Mammary epithelial cell (primary cell): ENCODE measurements at regions of chr10 and their contacts with region 1.

Region 1: GRCh38 chr10:72273410-72274212 is at the start of gene DDIT4:
- DNase-seq: peak; percentile 99
- H3K4me3 ChIP-seq: peak within 1 kb of the TSS; percentile 59 to 78 (median 66)
- H3K27ac ChIP-seq: peak within 1 kb of the TSS; percentile 93
- H3K4me1 ChIP-seq: peaks cover 27% of the 10 kb centered on the region
- H3K27me3 ChIP-seq: no peaks in the 10 kb centered on the region
- CTCF ChIP-seq: no peak
- total RNA-seq, gene DDIT4: 772 to 1,235 TPM

Region 2: GRCh38 chr10:72126184-72126871 is 147.3 kb before region 1 on chr10:
- CTCF ChIA-PET with region 1: no interaction called
- dilution Hi-C with region 1: no loop called
- in situ Hi-C with region 1: no loop called
- intact Hi-C with region 1: loop called (anchors 2 kb)
- DNase-seq: peak; percentile 25
- H3K4me3 ChIP-seq: no peak overlapping the region
- H3K27ac ChIP-seq: no peak overlapping the region
- H3K4me1 ChIP-seq: no peaks in the 10 kb centered on the region
- H3K27me3 ChIP-seq: no peaks in the 10 kb centered on the region
- CTCF ChIP-seq: peak; percentile 36 to 51

Region 3: GRCh38 chr10:72248468-72249151 is 25.0 kb before region 1 on chr10:
- CTCF ChIA-PET with region 1: no interaction called
- dilution Hi-C with region 1: no loop called
- in situ Hi-C with region 1: no loop called
- intact Hi-C with region 1: loop called (anchors 2 kb)
- DNase-seq: peak; percentile 92
- H3K4me3 ChIP-seq: no peak overlapping the region
- H3K27ac ChIP-seq: peak overlapping the region; percentile 93
- H3K4me1 ChIP-seq: peaks cover 62% of the 10 kb centered on the region
- H3K27me3 ChIP-seq: no peaks in the 10 kb centered on the region
- CTCF ChIP-seq: no peak

Region 4: DNA sequence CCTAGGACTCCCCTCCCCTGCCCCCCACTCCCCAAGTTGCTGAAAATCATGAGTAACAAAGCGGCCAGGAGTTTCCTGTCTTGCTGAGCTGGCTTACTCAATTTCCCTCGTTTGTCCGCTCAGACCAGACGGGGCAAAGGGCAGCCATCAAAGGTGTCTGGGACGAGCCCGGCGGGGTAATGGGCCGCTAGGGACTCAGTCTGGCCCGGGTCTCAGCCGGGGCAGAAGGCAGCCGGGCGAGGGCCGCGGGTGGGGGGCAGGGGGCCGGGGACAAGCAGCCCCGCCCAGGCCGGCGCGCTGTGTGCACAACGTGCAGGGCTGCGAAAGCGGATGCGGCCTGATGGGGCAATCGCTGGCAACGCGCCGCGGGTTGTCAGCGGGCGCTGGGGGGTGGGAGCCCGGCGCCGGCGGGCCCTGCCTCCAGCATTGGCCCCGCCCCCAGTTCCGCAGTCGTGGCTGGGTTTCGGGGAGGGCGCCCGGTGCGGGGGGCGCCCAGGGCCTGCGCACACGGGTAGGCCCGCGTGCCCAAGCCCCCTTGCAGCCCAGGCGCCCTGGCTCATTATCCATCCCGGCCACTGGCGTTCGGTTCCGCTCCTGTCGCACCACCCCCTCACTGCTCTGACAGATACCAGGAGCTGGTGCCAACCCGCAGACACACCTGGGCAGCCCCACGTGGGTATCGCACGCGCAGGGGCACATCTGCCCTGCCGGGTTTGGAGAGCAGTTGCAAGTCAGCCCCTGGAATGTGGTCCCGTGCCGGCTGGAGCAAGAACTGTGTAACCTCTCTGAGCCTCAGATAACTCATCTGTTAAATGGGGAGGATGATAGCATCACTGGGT is 46.0 kb after region 1 on chr10:
- CTCF ChIA-PET with region 1: interaction called, 7 read pairs
- dilution Hi-C with region 1: loop called (anchors 5 kb)
- in situ Hi-C with region 1: no loop called
- intact Hi-C with region 1: loop called (anchors 1 kb)
- DNase-seq: peak; percentile 99
- H3K4me3 ChIP-seq: peak overlapping the region in 1 of 3 experiments; percentile 33
- H3K27ac ChIP-seq: peak overlapping the region; percentile 99
- H3K4me1 ChIP-seq: peaks cover 77% of the 10 kb centered on the region
- H3K27me3 ChIP-seq: no peaks in the 10 kb centered on the region
- CTCF ChIP-seq: peak in 1 of 2 donors; percentile 5

Region 5: GRCh38 chr10:72337020-72337629 is 63.5 kb after region 1 on chr10:
- CTCF ChIA-PET with region 1: interaction called, 4 read pairs
- dilution Hi-C with region 1: no loop called
- in situ Hi-C with region 1: loop called (anchors 5 to 10 kb)
- intact Hi-C with region 1: loop called (anchors 1 kb)
- DNase-seq: peak; percentile 69
- H3K4me3 ChIP-seq: no peak overlapping the region
- H3K27ac ChIP-seq: peak overlapping the region; percentile 88
- H3K4me1 ChIP-seq: peaks cover 59% of the 10 kb centered on the region
- H3K27me3 ChIP-seq: no peaks in the 10 kb centered on the region
- CTCF ChIP-seq: peak; percentile 88 to 99